Activated CD4-positive, alpha-beta T cell treated with anti-CD3 and anti-CD28 coated beads for 36 hours (primary cell): ENCODE measurements at regions of chr18 and their contacts with region 1.

Region 1: DNA sequence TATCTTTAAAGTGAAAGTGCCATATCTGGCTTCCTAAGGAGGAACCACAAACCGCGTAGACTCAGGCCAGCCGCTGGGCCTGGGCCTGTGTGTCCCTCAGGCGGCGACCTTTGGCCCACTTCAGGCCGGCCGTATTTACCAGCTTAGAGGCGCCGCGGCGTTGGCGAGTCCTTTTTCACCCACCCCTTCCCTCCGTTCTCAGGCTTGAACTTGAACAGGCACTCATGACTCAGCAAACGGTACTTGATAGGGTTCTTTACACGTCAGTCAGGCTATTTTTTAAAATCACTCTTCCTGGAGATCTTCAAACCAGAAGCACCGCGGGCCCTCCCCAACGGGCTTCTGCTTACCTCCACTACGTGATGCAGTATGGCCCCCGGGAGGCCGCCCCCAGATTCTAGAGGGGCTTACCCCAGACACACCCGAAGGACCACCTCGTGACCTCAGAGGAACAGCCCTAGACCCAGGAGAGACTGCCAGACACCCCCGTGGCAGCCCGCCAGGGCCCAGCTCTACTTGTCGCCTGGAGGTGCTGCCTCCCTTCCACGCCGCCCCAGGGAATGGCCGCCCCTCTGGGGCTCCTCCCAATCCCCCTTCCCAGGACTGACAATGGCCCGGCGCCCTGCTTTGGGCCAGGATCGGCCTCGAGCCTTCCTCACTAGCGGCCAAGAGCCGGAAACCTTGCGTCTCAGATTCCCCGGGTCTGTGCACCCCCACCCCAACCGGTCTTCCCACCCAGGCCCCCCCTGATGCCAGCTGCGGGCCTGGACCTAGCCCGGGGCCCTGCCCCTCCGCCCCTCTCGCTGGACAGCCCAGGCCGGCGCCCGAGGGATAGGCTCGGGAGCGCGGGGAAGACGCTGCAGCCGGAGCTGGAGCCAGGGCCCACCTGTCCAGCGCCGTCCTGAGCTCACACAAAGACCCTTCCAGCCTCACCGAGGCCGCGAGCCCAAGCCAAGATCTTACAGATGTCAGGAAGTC is 33.8 kb upstream of the IMPA2 start:
- DNase-seq: peak; percentile 81
- ATAC-seq: peak; percentile 96
- H3K4me3 Mint-ChIP-seq: peak overlapping the region; percentile 74
- H3K27ac Mint-ChIP-seq: peak overlapping the region; percentile 88
- H3K4me1 Mint-ChIP-seq: peaks cover 10% of the 10 kb centered on the region
- H3K27me3 Mint-ChIP-seq: no peaks in the 10 kb centered on the region

Region 2: DNA sequence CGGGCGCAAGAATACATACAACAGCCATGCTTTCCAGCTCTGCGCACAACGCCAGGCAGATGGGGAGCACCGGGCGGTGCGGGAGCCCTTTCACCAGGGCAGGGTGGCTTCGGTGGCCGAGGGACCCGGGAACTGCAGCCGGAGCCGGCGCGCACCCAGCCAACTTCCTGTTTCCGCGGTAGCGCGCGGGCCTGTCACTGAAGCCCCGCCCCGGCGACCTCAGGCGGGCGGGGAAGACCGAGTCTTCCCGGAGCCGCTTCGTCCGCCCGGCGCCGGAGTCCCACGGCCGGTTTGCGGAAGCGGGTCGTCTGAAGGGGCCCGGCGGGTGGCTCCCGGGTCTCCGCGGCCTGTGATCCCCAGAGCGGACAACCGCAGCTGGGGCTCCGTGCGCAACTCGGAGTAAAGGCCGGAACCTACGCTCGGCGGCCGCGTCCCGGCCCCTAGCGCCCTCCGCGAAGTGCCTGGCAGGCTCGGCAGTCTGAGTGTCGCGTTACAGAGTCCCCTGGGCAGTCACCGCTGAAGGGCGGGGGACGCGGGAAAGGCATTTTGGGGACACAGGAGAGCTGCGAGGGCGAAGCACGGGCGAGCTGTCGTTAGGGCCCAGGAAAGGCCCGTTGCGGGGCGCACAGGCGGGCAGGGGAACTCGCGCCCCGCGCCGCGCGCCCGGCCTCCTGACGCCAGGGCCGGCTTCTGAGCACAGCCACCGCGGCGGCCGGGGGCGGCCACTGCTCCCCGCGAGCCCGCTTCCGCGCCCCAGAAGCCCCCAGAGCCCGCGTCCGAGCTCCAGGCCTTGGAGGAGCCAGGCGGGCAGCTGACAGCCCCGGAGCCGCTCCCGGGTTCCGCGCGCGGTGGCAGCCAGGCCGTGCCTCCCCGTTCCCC is 39.1 kb before region 1 on chr18 and contains the start of gene MPPE1:
- CTCF ChIA-PET with region 1: no interaction called
- POLR2A ChIA-PET with region 1: no interaction called
- intact Hi-C with region 1: loop called (anchors 1 kb)
- DNase-seq: peak; percentile 93
- ATAC-seq: peak; percentile 93
- H3K4me3 Mint-ChIP-seq: peak within 1 kb of the TSS; percentile 88
- H3K27ac Mint-ChIP-seq: peak within 1 kb of the TSS; percentile 94
- H3K4me1 Mint-ChIP-seq: peaks cover 18% of the 10 kb centered on the region
- H3K27me3 Mint-ChIP-seq: no peaks in the 10 kb centered on the region
- total RNA-seq, gene MPPE1: 22.4 to 29.6 TPM